ENCODE measurements at regions of chr10 and their contacts with region 1.

Region 1: DNA sequence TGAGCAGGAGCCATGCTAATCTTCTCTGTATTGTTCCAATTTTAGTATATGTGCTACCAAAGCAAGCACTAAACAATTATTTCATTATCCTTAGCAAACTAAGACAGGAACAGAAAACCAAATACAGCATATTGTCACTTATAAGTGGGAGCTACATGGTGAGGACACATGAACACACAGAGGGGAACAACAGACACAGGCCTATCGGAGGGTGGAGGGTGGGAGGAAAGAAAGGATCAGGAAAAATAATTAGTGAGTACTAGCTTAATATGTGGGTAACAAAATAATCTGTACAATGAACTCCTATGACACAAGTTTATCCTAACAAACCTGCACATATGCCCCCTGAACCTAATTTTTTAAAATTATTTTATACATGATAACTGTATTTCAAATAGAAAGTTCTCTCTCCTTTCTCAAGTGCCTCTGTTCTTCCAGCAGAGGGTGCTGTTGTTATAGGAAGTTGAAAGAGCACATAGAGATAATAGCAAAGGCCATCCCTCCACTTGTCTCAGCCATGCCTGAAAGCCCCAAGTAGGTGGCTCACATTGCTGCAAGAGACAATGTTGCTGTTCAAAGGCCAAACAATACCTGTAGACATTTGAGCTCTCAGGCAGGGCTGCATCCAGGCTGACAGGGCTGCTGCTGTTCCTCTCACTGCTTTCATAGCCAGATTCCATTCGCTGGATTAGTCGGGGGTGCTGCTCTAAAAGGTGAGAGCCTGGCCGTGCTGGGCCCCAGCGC is 33.4 kb upstream of the PPP3CB start:
- DNase-seq: peak; percentile 47
- H3K4me3 ChIP-seq: no peak overlapping the region
- CTCF ChIP-seq: peak; percentile 61

Region 2: GRCh38 chr10:73501651-73502050 is 27.6 kb before region 1 on chr10:
- CTCF ChIA-PET with region 1: interaction called, 25 read pairs
- POLR2A ChIA-PET with region 1: no interaction called
- DNase-seq: no peak
- H3K4me3 ChIP-seq: no peak overlapping the region
- CTCF ChIP-seq: no peak

Region 3: DNA sequence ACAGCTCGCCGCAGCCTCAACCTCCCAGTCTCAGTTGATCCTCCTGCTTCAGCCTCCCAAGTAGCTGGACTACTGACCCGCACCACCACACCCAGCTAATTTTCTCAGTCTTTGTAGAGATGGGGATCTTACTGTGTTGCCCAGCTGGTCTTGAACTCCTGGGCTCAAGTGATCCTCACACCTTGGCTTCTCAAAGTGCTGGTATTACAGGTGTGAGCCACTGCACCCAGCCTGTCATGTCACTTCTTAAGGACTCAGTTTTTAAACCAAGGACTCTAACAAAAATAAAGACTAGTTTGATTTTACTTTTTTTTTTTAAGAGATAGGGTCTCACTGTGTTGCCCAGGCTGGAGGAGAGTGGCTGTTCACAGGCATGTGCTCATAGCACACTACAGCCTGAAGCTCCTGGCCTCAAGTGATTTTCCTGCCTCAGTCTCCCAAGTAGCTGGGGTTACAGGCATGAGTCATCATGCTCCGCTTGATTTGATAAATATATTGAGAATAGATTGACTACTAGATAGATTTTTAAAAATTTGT is 17.0 kb before region 1 on chr10:
- CTCF ChIA-PET with region 1: interaction called, 22 read pairs
- POLR2A ChIA-PET with region 1: no interaction called
- DNase-seq: no peak
- H3K4me3 ChIP-seq: no peak overlapping the region
- CTCF ChIP-seq: no peak

Region 4: GRCh38 chr10:73517271-73517877 is 11.9 kb before region 1 on chr10:
- CTCF ChIA-PET with region 1: interaction called, 45 read pairs
- POLR2A ChIA-PET with region 1: no interaction called
- DNase-seq: no peak
- H3K4me3 ChIP-seq: no peak overlapping the region
- CTCF ChIP-seq: no peak

Region 5: GRCh38 chr10:73552819-73553715 is 23.8 kb after region 1 on chr10:
- CTCF ChIA-PET with region 1: interaction called, 19 read pairs
- POLR2A ChIA-PET with region 1: no interaction called
- DNase-seq: no peak
- H3K4me3 ChIP-seq: no peak overlapping the region
- CTCF ChIP-seq: no peak

Region 6: GRCh38 chr10:73601486-73601921 is 72.2 kb after region 1 on chr10:
- CTCF ChIA-PET with region 1: interaction called, 10 read pairs
- POLR2A ChIA-PET with region 1: no interaction called
- DNase-seq: no peak
- H3K4me3 ChIP-seq: no peak overlapping the region
- CTCF ChIP-seq: no peak

Region 7: DNA sequence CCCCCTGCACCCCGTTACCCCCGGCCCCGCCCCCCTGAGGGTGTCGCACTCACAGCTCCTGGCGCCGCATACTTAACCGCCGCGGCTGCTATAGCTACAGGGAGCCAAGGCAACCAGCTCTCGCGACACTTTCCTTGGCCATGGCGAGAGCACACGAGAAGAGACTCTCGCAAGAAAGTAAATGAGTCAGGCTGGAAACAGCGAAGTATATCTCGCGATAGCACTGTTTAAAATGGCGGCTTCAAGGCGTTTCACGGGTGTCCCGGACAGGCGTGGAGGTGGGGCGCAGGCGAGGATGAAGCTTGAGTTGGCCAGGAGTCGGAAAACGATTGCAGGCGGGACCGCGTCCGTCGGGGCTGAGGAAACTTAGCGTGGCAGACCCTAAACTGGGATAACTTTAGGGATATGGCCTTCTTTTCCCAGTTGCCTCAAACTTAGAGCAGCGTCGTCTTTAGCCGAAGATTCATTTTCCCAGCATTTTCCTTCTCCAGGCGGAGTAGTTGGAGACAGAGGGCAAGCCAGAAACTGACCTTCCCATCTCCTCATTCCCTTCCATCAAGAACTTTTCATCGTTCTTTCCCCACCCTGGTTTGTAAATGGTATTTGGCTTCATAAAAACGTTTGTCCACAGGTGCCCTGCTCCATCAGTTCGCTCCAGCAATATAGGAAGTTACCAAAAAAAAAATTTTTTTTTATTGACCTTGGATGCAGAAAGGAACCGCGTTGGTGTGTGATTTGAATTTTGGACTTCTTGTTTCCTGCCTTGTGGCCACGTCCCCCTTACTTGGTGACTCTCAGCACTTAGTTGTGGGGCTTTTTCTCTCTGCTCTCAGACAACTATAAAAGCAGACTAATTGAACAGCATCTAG is 96.9 kb after region 1 on chr10:
- CTCF ChIA-PET with region 1: interaction called, 560 read pairs
- POLR2A ChIA-PET with region 1: interaction called, 3 read pairs
- DNase-seq: peak; percentile 82
- H3K4me3 ChIP-seq: peak overlapping the region; percentile 91
- CTCF ChIP-seq: no peak

Region 8: GRCh38 chr10:73814896-73815718 is 285.8 kb after region 1 on chr10:
- CTCF ChIA-PET with region 1: no interaction called
- POLR2A ChIA-PET with region 1: no interaction called
- DNase-seq: no peak
- H3K4me3 ChIP-seq: no peak overlapping the region
- CTCF ChIP-seq: no peak

Measured in AG04449 (cell line).